Aorta (tissue), 5 donors: ENCODE measurements at regions of chr2 and their contacts with region 1.

Region 1: DNA sequence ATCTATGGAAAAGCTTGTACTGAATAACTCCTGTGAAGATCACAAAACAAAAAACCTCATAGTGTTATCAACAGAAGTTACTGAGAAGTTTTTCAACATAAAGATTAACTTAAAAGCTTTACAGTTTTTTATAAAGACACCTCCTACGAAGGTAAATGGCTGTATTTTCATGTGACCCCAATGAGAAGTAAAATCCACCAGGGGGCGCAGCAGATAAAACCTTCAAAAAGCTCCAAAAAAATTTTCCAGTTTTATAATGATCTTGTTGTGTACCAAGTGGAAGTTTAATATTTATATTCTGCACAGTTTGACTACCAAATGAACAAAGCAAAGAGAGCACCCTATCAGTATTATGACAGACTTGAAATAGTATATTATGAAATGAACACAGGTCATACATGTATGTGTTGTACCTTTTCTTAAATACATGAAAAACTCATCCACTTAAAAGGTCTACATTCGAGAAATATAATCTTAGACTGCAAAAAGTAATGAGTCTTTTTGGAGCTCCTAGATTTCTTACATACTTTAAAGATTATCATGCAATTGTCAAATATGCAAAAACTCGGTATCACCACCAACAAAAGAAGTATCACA is 38.5 kb downstream of the PNO1 start:
- DNase-seq: no peak
- ATAC-seq: no peak
- H3K4me3 ChIP-seq: no peak overlapping the region
- H3K27ac ChIP-seq: no peak overlapping the region
- H3K4me1 ChIP-seq: peaks cover 0 to 9% of the 10 kb centered on the region in 2 donors
- H3K27me3 ChIP-seq: no peaks in the 10 kb centered on the region

Region 2: GRCh38 chr2:68251187-68251854 is 55.1 kb after region 1 on chr2:
- intact Hi-C with region 1: loop called (anchors 5 kb)
- DNase-seq: peak; percentile 75 to 81
- ATAC-seq: peak; percentile 70
- H3K4me3 ChIP-seq: peak overlapping the region; percentile 96 to 100
- H3K27ac ChIP-seq: peak overlapping the region; percentile 80 to 99
- H3K4me1 ChIP-seq: peaks cover 0 to 9% of the 10 kb centered on the region in 2 donors
- H3K27me3 ChIP-seq: peaks cover 0 to 2% of the 10 kb centered on the region in 2 donors

Region 3: DNA sequence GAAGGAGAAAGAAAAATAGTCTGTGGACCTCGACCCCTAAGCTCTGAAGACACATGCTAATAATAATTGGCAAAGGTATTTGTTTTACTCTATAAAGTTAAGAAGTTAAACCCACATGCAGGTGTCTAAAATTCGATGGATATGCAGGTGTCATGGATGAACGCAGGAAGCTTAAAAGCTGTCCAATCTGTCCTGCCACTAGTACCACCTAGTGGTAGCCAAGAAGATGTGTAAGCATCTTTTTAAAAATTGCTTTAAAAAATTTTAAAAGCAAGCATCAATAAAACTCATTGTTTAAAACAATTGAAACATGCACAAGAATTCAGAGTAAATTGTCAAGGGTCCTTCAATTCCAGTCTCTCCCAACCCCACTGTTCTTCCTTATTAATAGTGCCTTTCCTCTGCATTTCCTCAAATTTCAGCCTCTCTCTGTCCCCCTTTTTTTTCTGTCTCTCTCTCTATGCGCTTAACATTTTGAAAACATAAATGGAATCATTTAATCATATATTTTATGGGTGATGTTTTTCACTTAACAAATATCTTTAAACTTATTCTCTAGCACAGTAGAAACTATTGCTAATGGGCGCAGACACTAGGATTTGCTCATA is 86.7 kb after region 1 on chr2:
- intact Hi-C with region 1: loop called in 1 of 2 experiments (anchors 10 kb)
- DNase-seq: no peak
- ATAC-seq: no peak
- H3K4me3 ChIP-seq: peak overlapping the region in 1 of 2 donors; percentile 18
- H3K27ac ChIP-seq: no peak overlapping the region
- H3K4me1 ChIP-seq: no peaks in the 10 kb centered on the region
- H3K27me3 ChIP-seq: no peaks in the 10 kb centered on the region

Region 4: GRCh38 chr2:68336192-68336591 is 140.0 kb after region 1 on chr2:
- intact Hi-C with region 1: no loop called
- DNase-seq: no peak
- ATAC-seq: no peak
- H3K4me3 ChIP-seq: no peak overlapping the region
- H3K27ac ChIP-seq: no peak overlapping the region
- H3K4me1 ChIP-seq: no peaks in the 10 kb centered on the region
- H3K27me3 ChIP-seq: no peaks in the 10 kb centered on the region

Region 5: GRCh38 chr2:68434981-68435380 is 238.8 kb after region 1 on chr2:
- intact Hi-C with region 1: loop called in 1 of 2 experiments (anchors 10 kb)
- DNase-seq: no peak
- ATAC-seq: no peak
- H3K4me3 ChIP-seq: no peak overlapping the region
- H3K27ac ChIP-seq: peak overlapping the region in 1 of 2 donors; percentile 47
- H3K4me1 ChIP-seq: peaks cover 0 to 2% of the 10 kb centered on the region in 2 donors
- H3K27me3 ChIP-seq: no peaks in the 10 kb centered on the region